Caco-2 (cell line): ENCODE measurements at regions of chr4 and their contacts with region 1.

Region 1: GRCh38 chr4:71772592-71772991 is 11.3 kb downstream of the GC start:
- DNase-seq: no peak
- H3K4me3 ChIP-seq: no peak overlapping the region
- H3K4me3 Mint-ChIP-seq: no peak overlapping the region
- H3K27ac Mint-ChIP-seq: no peak overlapping the region
- H3K4me1 ChIP-seq: no peaks in the 10 kb centered on the region
- H3K4me1 Mint-ChIP-seq: no peaks in the 10 kb centered on the region
- H3K27me3 ChIP-seq: no peaks in the 10 kb centered on the region
- H3K27me3 Mint-ChIP-seq: no peaks in the 10 kb centered on the region
- CTCF ChIP-seq: peak in 1 of 2 experiments; percentile 18

Region 2: GRCh38 chr4:71713611-71714203 is 58.9 kb before region 1 on chr4:
- CTCF ChIA-PET with region 1: no interaction called
- POLR2A ChIA-PET with region 1: no interaction called
- intact Hi-C with region 1: no loop called
- DNase-seq: peak in 1 of 2 experiments; percentile 21
- H3K4me3 ChIP-seq: no peak overlapping the region
- H3K4me3 Mint-ChIP-seq: no peak overlapping the region
- H3K27ac Mint-ChIP-seq: no peak overlapping the region
- H3K4me1 ChIP-seq: no peaks in the 10 kb centered on the region
- H3K4me1 Mint-ChIP-seq: no peaks in the 10 kb centered on the region
- H3K27me3 ChIP-seq: no peaks in the 10 kb centered on the region
- H3K27me3 Mint-ChIP-seq: no peaks in the 10 kb centered on the region
- CTCF ChIP-seq: peak; percentile 33 to 46

Region 3: DNA sequence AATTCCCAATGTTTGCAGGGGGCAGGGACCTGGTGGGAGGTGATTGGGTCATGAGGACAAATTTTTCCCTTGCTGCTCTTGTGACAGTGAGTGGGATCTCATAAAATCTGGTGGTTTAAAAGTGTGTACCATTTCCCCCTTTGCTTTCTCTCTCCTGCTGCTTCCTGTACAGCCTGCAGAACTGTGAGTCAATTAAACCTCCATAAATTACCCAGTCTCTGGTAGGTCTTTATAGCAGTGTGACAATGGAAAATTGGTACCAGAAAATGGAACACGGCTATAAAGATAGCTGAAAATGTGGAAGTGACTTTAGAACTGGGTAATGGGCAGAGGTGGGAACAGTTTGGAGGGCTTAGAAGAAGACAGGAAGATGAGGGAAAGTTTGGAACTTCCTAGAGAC is 150.5 kb after region 1 on chr4:
- CTCF ChIA-PET with region 1: no interaction called
- POLR2A ChIA-PET with region 1: no interaction called
- intact Hi-C with region 1: loop called (anchors 5 kb)
- DNase-seq: no peak
- H3K4me3 ChIP-seq: no peak overlapping the region
- H3K4me3 Mint-ChIP-seq: no peak overlapping the region
- H3K27ac Mint-ChIP-seq: no peak overlapping the region
- H3K4me1 ChIP-seq: no peaks in the 10 kb centered on the region
- H3K4me1 Mint-ChIP-seq: no peaks in the 10 kb centered on the region
- H3K27me3 ChIP-seq: no peaks in the 10 kb centered on the region
- H3K27me3 Mint-ChIP-seq: no peaks in the 10 kb centered on the region
- CTCF ChIP-seq: no peak

Region 4: DNA sequence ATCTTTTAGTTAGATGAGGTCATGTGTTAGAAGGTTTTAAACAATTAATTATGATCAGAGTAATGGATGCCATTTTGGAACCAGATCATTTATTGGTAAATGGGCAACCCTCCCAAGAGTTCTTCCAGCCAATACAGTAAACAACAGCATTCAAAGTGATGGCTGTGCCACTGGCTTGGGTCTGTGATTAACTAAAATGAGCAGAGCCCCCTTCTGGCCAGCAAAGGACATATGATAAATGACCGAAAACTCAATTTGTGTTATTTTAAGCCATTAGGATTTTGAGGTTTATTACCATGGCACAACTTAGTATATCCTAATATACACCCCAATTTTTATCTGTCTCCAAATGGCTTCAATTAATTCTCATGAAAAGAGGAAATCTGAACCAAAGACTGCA is 168.4 kb after region 1 on chr4:
- CTCF ChIA-PET with region 1: no interaction called
- POLR2A ChIA-PET with region 1: no interaction called
- intact Hi-C with region 1: loop called (anchors 1 kb)
- DNase-seq: peak in 1 of 2 experiments; percentile 35
- H3K4me3 ChIP-seq: no peak overlapping the region
- H3K4me3 Mint-ChIP-seq: no peak overlapping the region
- H3K27ac Mint-ChIP-seq: no peak overlapping the region
- H3K4me1 ChIP-seq: no peaks in the 10 kb centered on the region
- H3K4me1 Mint-ChIP-seq: no peaks in the 10 kb centered on the region
- H3K27me3 ChIP-seq: no peaks in the 10 kb centered on the region
- H3K27me3 Mint-ChIP-seq: no peaks in the 10 kb centered on the region
- CTCF ChIP-seq: peak; percentile 25 to 32

Region 5: GRCh38 chr4:72286185-72286584 is 513.6 kb after region 1 on chr4:
- CTCF ChIA-PET with region 1: no interaction called
- POLR2A ChIA-PET with region 1: no interaction called
- intact Hi-C with region 1: no loop called
- DNase-seq: no peak
- H3K4me3 ChIP-seq: no peak overlapping the region
- H3K4me3 Mint-ChIP-seq: no peak overlapping the region
- H3K27ac Mint-ChIP-seq: no peak overlapping the region
- H3K4me1 ChIP-seq: no peaks in the 10 kb centered on the region
- H3K4me1 Mint-ChIP-seq: no peaks in the 10 kb centered on the region
- H3K27me3 ChIP-seq: no peaks in the 10 kb centered on the region
- H3K27me3 Mint-ChIP-seq: peaks cover 5% of the 10 kb centered on the region
- CTCF ChIP-seq: no peak

Region 6: DNA sequence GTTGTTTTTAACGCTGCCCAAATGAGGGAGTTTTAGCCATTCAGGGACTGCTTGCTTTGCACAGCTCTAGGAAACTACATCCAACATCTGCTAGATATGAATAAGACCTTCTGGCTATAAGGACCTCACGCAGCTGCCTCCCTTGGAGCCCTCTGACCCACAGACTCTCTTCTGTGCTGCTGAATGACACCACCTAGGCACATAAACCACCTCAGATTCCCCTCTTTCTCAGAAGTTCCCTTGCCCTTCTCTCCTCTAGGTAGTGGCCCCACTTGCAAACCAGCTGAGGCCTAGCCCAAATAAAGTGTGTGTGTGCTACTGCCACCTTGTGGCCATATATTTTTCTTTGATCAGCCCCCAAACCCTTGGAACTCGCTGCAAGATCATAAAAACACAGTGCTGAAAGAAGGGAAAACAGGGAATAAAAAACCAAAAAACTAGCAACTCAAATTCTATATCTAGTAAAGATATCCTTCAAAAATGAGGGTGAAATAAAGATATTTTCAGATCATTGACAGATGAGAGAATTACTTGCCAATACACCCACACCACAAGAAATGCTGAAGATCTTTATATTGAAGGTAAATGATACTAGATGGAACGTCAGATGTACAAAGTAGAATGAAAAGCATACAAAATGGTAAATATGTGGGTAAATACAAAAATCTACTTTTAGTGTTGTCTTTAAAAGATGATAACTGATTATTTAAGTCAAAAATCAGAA is 530.6 kb after region 1 on chr4:
- CTCF ChIA-PET with region 1: no interaction called
- POLR2A ChIA-PET with region 1: no interaction called
- intact Hi-C with region 1: loop called (anchors 5 kb)
- DNase-seq: peak; percentile 44 to 54
- H3K4me3 ChIP-seq: no peak overlapping the region
- H3K4me3 Mint-ChIP-seq: no peak overlapping the region
- H3K27ac Mint-ChIP-seq: no peak overlapping the region
- H3K4me1 ChIP-seq: no peaks in the 10 kb centered on the region
- H3K4me1 Mint-ChIP-seq: no peaks in the 10 kb centered on the region
- H3K27me3 ChIP-seq: no peaks in the 10 kb centered on the region
- H3K27me3 Mint-ChIP-seq: peaks cover 3% of the 10 kb centered on the region
- CTCF ChIP-seq: peak; percentile 61 to 62